Common myeloid progenitor, CD34-positive (primary cell): ENCODE measurements at regions of chr5 and their contacts with region 1.

Region 1: DNA sequence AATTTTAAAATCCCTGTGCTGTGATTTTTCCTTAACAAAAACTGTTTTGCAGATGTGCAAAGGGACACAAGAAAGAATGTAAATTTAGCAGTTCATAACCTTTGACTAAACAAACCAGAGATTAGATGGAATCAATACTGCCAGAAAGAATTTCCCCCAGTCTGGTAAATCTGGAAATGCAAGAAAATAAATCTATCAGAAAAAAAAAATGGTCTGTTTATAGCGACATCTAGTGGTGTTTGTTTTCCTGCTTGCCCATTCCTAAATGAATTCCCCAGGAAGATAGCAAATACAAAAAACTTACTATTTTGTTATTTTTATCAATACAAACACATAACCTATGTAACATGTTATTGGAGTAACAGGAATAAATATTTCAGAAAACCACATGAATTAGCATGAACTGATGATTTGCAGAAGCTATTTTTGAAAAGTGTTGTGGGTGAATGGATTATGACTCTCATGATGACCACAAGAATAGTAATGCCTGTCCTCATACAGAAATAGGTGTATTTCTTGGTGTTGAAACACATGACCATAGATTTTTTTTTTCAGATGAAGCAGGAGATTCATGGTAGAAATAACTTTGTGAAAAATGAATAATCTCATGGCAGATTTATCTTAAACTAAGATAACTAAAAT is 1703.8 kb downstream of the MAT2B start:
- DNase-seq: peak; percentile 26 to 51 (median 39)
- H3K4me3 ChIP-seq: no peak overlapping the region
- H3K27ac ChIP-seq: no peak overlapping the region
- H3K4me1 ChIP-seq: peaks cover 0 to 9% (median 0%) of the 10 kb centered on the region in 4 experiments
- H3K27me3 ChIP-seq: no peaks in the 10 kb centered on the region

Region 2: DNA sequence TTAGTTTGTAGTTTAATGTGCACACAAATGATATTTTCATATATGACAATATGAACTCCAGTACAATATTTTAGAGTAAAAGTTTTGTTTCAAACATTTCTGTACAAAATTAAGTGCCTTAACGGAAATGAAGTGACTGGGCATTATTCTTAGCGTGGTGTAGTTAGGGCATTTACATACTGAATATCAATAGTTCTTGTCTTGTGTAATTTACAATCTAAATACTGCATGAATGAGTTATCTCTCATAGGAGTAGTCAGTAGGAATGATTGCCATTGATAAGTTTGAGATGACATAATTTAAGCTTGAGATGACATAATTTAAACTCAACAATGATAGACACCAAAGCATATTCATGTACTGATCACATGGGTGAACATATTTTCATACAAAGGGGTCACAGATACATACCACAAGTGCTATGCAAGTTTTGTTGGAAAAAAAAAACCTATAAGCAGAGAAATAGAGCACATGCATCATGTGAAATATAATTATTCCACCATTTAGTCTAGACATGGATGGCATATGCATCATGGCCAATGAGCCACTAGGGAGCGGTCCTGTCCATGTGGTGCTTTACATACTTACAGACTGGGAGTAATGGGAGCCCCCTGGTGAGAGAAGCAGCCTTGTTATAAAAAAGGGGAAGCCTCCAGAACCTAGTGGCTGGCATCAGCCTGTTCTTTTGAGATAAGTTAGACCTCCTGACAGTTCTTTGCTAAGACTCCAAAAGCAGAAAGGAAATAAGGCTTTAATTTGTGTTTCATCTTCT is 179.9 kb before region 1 on chr5:
- CTCF ChIA-PET with region 1: interaction called, 25 read pairs
- POLR2A ChIA-PET with region 1: no interaction called
- DNase-seq: peak; percentile 87 to 95 (median 92)
- H3K4me3 ChIP-seq: no peak overlapping the region
- H3K27ac ChIP-seq: no peak overlapping the region
- H3K4me1 ChIP-seq: peaks cover 0 to 13% (median 10%) of the 10 kb centered on the region in 4 experiments
- H3K27me3 ChIP-seq: no peaks in the 10 kb centered on the region

Region 3: DNA sequence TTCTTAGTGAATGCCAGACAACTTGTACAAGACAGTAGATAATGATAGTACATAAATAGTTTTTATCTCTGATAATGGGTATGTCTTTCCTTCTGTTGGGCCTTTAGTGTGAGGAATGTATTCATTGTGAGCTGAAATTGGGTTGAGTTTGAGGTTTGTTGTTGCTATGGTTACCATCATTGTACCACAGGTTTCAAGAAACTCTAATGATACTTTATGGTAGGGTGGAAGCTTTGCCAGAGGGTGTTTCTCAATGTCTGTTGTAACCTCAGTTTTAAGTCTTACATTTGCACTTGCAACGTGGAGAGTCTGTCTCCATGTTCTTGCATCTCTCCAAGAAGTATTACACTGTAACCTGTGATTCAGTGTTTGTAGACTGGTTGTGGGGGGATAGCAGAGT is 153.7 kb before region 1 on chr5:
- CTCF ChIA-PET with region 1: no interaction called
- POLR2A ChIA-PET with region 1: no interaction called
- DNase-seq: peak in 1 of 3 donors; percentile 1
- H3K4me3 ChIP-seq: no peak overlapping the region
- H3K27ac ChIP-seq: no peak overlapping the region
- H3K4me1 ChIP-seq: peaks cover 0 to 3% (median 0%) of the 10 kb centered on the region in 4 experiments
- H3K27me3 ChIP-seq: no peaks in the 10 kb centered on the region

Region 4: DNA sequence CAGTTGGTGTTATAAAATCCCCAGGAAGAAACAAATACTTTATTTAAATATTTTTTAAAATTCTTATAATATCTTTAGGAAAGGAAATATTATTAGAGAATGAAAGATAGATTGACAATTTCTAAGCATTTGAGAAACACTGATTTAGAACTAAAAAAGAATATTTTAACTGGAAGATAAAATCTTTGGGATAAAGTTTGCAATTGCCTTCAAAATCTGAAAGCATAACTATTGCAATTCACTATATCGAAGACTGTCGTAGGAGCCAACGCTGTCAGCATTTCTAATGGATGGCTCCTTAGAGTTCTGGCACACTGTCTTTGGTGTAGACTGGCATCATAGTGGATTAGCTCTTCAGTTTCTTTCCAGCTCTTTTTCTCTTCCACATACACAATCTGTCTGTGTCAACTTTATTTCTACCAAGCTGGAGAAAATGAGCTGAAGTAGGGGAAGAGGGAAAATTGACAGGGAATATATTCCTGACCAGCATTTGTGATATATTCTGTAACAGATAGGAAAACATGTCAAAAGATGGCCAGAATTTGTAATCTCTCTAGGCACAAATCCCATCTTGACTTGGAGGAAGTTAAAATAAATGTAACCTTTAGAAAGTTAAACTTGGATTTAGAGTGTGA is 142.3 kb before region 1 on chr5:
- CTCF ChIA-PET with region 1: no interaction called
- POLR2A ChIA-PET with region 1: no interaction called
- DNase-seq: no peak
- H3K4me3 ChIP-seq: no peak overlapping the region
- H3K27ac ChIP-seq: no peak overlapping the region
- H3K4me1 ChIP-seq: no peaks in the 10 kb centered on the region
- H3K27me3 ChIP-seq: no peaks in the 10 kb centered on the region